ENCODE measurements at regions of chr1 and their contacts with region 1.

Region 1: DNA sequence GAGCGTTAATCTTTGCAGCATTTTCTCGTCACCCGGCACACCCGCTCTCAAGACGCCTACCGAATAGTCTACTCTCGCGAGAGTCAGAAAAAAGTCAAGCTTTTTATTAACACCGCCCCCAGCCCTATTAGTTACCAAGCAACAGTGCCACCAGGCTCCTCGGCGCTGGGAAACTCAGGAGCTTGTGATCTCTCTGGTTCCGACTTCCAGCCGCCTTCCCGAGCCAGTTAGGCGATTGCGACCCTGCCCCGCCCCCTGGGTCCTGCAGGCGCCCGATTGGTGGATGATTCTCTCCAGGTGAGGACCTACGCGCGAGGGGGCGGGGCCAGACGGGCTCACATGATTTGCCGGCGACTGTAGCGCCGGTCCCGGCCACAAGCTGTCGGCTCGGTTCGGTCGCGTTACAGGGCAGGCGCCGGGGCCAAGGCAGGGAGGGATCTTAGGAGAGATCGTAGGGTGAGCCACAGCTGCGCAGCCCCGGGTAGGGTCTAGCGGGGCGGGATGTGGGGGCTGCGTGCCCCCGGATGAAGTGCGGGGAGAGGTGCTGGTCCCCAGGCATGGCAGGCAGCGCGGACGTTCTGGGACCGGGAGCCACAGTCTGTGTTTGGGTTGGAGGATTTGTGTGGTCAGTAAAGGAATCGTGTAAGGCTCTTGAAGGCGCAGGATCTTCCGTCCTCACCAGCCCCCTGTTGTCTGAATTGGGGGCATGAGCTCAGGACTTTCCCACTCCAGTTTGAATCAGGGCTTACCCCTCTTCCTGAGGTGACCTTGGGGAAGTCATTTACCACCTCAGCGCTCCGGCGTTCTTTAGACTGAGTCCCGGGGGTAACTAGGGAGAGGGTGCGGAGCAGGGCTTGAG is at the start of gene PFKFB2:
- DNase-seq: peak; percentile 98 to 100 (median 98)
- ATAC-seq: peak; percentile 85
- H3K4me3 ChIP-seq: peak within 1 kb of the TSS; percentile 92
- H3K27ac ChIP-seq: peak within 1 kb of the TSS; percentile 94
- H3K4me1 ChIP-seq: peaks cover 14 to 47% of the 10 kb centered on the region in 2 experiments
- H3K27me3 ChIP-seq: no peaks in the 10 kb centered on the region
- CTCF ChIP-seq: peak in 2 of 3 experiments; percentile 11 to 33; a peak in 2 of 6 replicates
- EP300 ChIP-seq: no peak; the same call in 1 of the 2 replicates
- POLR2A ChIP-seq: peak; percentile 98
- RAD21 ChIP-seq: 0 out of 4 replicates have a peak, but pooled peaks of 1 of the 2 experiments have one; percentile 7
- polyA plus RNA-seq, gene PFKFB2: 6.9 to 7.6 TPM

Region 2: DNA sequence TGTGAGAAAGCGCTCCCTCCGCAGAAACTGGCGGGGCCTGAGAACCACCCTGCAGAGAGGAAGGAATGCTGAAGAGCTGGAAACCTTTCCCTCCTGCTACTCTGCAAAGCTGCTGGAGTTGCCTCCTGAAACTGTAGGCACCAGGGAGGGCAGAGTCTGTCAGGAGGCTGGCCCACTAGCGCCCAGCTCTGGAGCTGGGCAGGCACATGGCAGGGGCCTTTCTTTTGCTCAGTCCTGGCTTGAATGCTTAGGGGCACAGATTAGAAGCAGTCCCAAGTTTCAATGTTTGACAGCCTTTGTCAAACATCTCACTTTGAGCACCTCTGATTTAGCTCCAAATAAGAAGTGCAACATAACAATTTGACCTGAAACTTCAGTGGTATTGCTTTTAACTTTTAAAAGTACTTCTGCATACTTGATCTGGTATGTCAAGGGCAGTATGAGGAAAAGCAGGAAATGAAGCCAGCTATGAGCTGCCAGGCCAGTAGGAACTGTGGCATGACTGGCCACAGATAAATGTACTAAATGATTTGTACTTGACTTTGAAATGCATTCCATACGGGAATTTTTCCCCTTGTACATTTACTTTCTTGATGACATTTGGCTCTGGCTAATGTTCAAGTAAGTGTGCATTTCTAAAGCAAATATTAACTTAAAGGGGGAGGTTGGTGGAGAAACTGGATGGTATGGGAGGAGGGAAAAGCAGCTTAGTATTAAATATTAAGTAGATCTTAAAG is 27.8 kb before region 1 on chr1:
- CTCF ChIA-PET with region 1: no interaction called
- POLR2A ChIA-PET with region 1: interaction called, 104 read pairs
- in situ Hi-C with region 1: no loop called
- intact Hi-C with region 1: no loop called
- DNase-seq: no peak
- ATAC-seq: peak; percentile 6
- H3K4me3 ChIP-seq: peak overlapping the region; percentile 15
- H3K27ac ChIP-seq: peak overlapping the region; percentile 100
- H3K4me1 ChIP-seq: peaks cover 49 to 85% of the 10 kb centered on the region in 2 experiments
- H3K27me3 ChIP-seq: no peaks in the 10 kb centered on the region
- CTCF ChIP-seq: 0 out of 6 replicates have a peak, but pooled peaks of 1 of the 3 experiments have one; percentile 4
- EP300 ChIP-seq: peak; percentile 2; the same call in 1 of the 2 replicates
- POLR2A ChIP-seq: no peak
- RAD21 ChIP-seq: no peak; a peak in 2 of 4 replicates

Region 3: DNA sequence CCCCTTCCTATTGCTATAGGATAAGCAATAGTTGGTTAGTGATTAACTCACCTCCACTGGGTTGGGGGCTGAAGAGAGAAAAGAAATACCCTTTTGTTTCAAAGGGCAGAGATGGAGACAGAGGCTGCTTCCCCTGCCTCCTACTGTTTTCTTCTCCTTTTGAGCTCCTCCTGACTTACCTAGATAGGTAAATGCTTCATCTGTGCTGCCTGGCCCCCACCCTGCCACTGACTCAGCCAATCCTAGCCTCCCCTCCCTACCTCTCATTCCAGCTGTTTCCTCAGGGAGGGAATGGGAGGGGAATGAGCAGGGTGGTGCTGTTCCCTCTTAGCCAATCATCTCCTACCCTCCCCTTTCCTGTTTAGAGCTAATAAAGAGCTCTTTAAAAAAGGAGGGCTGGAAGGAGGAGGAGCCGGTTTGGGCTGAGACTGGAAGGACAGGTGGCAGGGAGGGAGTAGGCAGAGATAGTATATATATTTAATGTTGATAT is 20.6 kb before region 1 on chr1 and contains the start of gene C1orf116:
- CTCF ChIA-PET with region 1: no interaction called
- POLR2A ChIA-PET with region 1: interaction called, 104 read pairs
- in situ Hi-C with region 1: no loop called
- intact Hi-C with region 1: no loop called
- DNase-seq: peak; percentile 93 to 98 (median 97)
- ATAC-seq: peak; percentile 88
- H3K4me3 ChIP-seq: no peak within 1 kb of the TSS
- H3K27ac ChIP-seq: peak within 1 kb of the TSS; percentile 44
- H3K4me1 ChIP-seq: peaks cover 13 to 94% of the 10 kb centered on the region in 2 experiments
- H3K27me3 ChIP-seq: no peaks in the 10 kb centered on the region
- CTCF ChIP-seq: no peak
- EP300 ChIP-seq: no peak; the same call in 1 of the 2 replicates
- POLR2A ChIP-seq: no peak
- RAD21 ChIP-seq: no peak
- polyA plus RNA-seq, gene C1orf116: 0.62 to 0.69 TPM

Region 4: DNA sequence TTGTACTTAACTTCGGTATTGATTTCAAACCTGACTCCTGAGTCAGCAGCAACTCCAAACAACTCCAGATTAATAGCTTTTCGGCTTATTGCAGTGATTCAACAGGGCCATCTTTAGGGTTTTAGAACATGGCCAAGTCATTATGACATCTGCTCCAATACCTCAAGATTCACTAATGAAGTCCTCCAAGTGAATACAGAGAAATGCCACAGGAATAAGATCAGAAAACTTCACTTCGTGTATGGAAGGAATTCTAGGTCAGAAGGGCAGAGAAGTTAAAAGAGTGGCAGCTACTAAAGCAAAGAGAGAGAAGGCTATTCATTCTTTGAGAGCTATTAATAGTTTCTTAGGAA is 13.0 kb before region 1 on chr1:
- CTCF ChIA-PET with region 1: no interaction called
- POLR2A ChIA-PET with region 1: interaction called, 104 read pairs
- in situ Hi-C with region 1: no loop called
- intact Hi-C with region 1: no loop called
- DNase-seq: no peak
- ATAC-seq: peak; percentile 4
- H3K4me3 ChIP-seq: no peak overlapping the region
- H3K27ac ChIP-seq: peak overlapping the region; percentile 19; the same call in 2 of the 3 replicates
- H3K4me1 ChIP-seq: peaks cover 9 to 37% of the 10 kb centered on the region in 2 experiments
- H3K27me3 ChIP-seq: no peaks in the 10 kb centered on the region
- CTCF ChIP-seq: no peak
- EP300 ChIP-seq: no peak
- POLR2A ChIP-seq: no peak
- RAD21 ChIP-seq: no peak

Region 5: GRCh38 chr1:207077470-207078377 is 24.6 kb after region 1 on chr1:
- CTCF ChIA-PET with region 1: interaction called, 17 read pairs
- POLR2A ChIA-PET with region 1: interaction called, 4 read pairs
- in situ Hi-C with region 1: no loop called
- intact Hi-C with region 1: loop called (anchors 1 kb)
- DNase-seq: peak; percentile 79 to 91 (median 82)
- ATAC-seq: peak; percentile 96
- H3K4me3 ChIP-seq: no peak overlapping the region
- H3K27ac ChIP-seq: no peak overlapping the region
- H3K4me1 ChIP-seq: peaks cover 0 to 10% of the 10 kb centered on the region in 2 experiments; a peak in 2 of 5 replicates
- H3K27me3 ChIP-seq: no peaks in the 10 kb centered on the region
- CTCF ChIP-seq: peak; percentile 92 to 98 (median 95)
- EP300 ChIP-seq: no peak
- POLR2A ChIP-seq: no peak
- RAD21 ChIP-seq: peak; percentile 97 to 98

Region 6: DNA sequence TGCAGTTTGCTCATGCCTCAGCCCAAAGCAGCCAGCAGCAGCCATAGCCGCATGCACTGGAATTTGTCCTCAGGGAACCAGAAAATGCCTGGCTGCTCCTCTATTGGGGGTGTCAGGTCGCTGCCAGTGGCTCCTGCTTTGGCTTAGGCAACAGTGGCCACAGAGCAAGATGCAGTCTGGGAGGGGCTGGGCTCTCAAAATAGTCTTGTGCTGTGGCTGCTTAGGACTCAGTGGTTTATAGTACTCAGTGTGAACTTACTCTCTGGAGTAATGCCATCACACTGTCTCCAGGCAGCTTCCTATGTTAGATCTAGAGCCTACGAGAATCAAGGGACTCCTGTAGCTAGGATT is 293.4 kb after region 1 on chr1:
- CTCF ChIA-PET with region 1: no interaction called
- POLR2A ChIA-PET with region 1: no interaction called
- in situ Hi-C with region 1: no loop called
- intact Hi-C with region 1: no loop called
- DNase-seq: no peak
- ATAC-seq: peak; percentile 41
- H3K4me3 ChIP-seq: no peak overlapping the region
- H3K27ac ChIP-seq: no peak overlapping the region
- H3K4me1 ChIP-seq: no peaks in the 10 kb centered on the region
- H3K27me3 ChIP-seq: no peaks in the 10 kb centered on the region
- CTCF ChIP-seq: no peak
- EP300 ChIP-seq: no peak
- POLR2A ChIP-seq: no peak
- RAD21 ChIP-seq: no peak

Region 7: GRCh38 chr1:207644852-207645634 is 591.9 kb after region 1 on chr1 and contains the start of gene CR1L:
- CTCF ChIA-PET with region 1: no interaction called
- POLR2A ChIA-PET with region 1: no interaction called
- in situ Hi-C with region 1: no loop called
- intact Hi-C with region 1: loop called (anchors 10 kb)
- DNase-seq: peak; percentile 95 to 99 (median 96)
- ATAC-seq: peak; percentile 87
- H3K4me3 ChIP-seq: peak within 1 kb of the TSS; percentile 67
- H3K27ac ChIP-seq: peak within 1 kb of the TSS; percentile 80
- H3K4me1 ChIP-seq: peaks cover 23 to 25% of the 10 kb centered on the region in 2 experiments
- H3K27me3 ChIP-seq: no peaks in the 10 kb centered on the region
- CTCF ChIP-seq: no peak
- EP300 ChIP-seq: no peak
- POLR2A ChIP-seq: peak; percentile 86
- RAD21 ChIP-seq: no peak
- polyA plus RNA-seq, gene CR1L: 53.4 to 74.8 TPM